Activated naive CD4-positive, alpha-beta T cell treated with anti-CD3 and anti-CD28 coated beads, Interleukin-2, amount 10 ng/mL, durations not matched to agents 7 days and 5 days (primary cell): ENCODE measurements at regions of chr11 and their contacts with region 1.

Region 1: GRCh38 chr11:120511116-120511819 is at the start of gene GRIK4:
- DNase-seq: peak; percentile 79
- H3K4me3 Mint-ChIP-seq: no peak within 1 kb of the TSS
- H3K27ac Mint-ChIP-seq: no peak within 1 kb of the TSS
- H3K4me1 Mint-ChIP-seq: peaks cover 2% of the 10 kb centered on the region
- H3K27me3 Mint-ChIP-seq: peaks cover 71% of the 10 kb centered on the region

Region 2: DNA sequence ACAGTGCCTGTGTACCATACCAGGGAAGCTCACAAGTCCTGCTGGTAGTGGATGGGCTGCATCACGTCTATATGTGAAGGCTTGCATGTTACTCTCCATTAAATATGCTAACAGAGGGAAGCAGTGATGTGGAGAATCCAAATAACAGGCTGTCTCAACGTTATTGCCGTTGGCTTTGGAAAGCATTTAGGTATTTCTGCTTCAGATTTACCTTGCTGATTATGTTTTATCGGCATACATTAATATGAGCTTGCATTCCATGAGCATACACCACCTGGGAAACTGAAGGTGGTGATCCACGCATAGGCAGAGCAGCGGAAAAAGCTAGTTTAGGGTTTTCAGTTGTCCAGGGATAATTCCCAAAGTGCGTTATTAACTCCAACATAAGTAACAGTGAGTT is 175.2 kb after region 1 on chr11:
- CTCF ChIA-PET with region 1: interaction called, 25 read pairs
- DNase-seq: no peak
- H3K4me3 Mint-ChIP-seq: no peak overlapping the region
- H3K27ac Mint-ChIP-seq: no peak overlapping the region
- H3K4me1 Mint-ChIP-seq: no peaks in the 10 kb centered on the region
- H3K27me3 Mint-ChIP-seq: peaks cover 25% of the 10 kb centered on the region